Ovary (tissue), 10 donors: ENCODE measurements at regions of chr9 and their contacts with region 1.

Region 1: GRCh38 chr9:74609671-74610405 is 112.7 kb downstream of the RORB start:
- DNase-seq: no peak
- H3K4me3 ChIP-seq: no peak overlapping the region
- H3K27ac ChIP-seq: no peak overlapping the region
- H3K4me1 ChIP-seq: no peaks in the 10 kb centered on the region
- H3K27me3 ChIP-seq: no peaks in the 10 kb centered on the region
- CTCF ChIP-seq: no peak
- EP300 ChIP-seq: no peak
- POLR2A ChIP-seq: no peak

Region 2: GRCh38 chr9:73655363-73655762 is 954.5 kb before region 1 on chr9:
- intact Hi-C with region 1: no loop called
- DNase-seq: no peak
- H3K4me3 ChIP-seq: no peak overlapping the region
- H3K27ac ChIP-seq: no peak overlapping the region
- H3K4me1 ChIP-seq: no peaks in the 10 kb centered on the region
- H3K27me3 ChIP-seq: no peaks in the 10 kb centered on the region
- CTCF ChIP-seq: no peak
- EP300 ChIP-seq: no peak
- POLR2A ChIP-seq: no peak

Region 3: GRCh38 chr9:74220327-74220726 is 389.5 kb before region 1 on chr9:
- intact Hi-C with region 1: loop called in 1 of 4 experiments (anchors 10 kb)
- DNase-seq: no peak
- H3K4me3 ChIP-seq: no peak overlapping the region
- H3K27ac ChIP-seq: no peak overlapping the region
- H3K4me1 ChIP-seq: no peaks in the 10 kb centered on the region
- H3K27me3 ChIP-seq: no peaks in the 10 kb centered on the region
- CTCF ChIP-seq: no peak
- EP300 ChIP-seq: no peak
- POLR2A ChIP-seq: no peak